ENCODE measurements at regions of chr21 and their contacts with region 1.

Region 1: GRCh38 chr21:29149771-29150425 is 19.5 kb downstream of the MAP3K7CL start:
- DNase-seq: no peak
- H3K4me3 ChIP-seq: no peak overlapping the region
- H3K27ac ChIP-seq: no peak overlapping the region
- H3K4me1 ChIP-seq: peaks cover 16 to 21% of the 10 kb centered on the region in 2 donors
- H3K27me3 ChIP-seq: no peaks in the 10 kb centered on the region
- CTCF ChIP-seq: no peak
- POLR2A ChIP-seq: no peak

Region 2: DNA sequence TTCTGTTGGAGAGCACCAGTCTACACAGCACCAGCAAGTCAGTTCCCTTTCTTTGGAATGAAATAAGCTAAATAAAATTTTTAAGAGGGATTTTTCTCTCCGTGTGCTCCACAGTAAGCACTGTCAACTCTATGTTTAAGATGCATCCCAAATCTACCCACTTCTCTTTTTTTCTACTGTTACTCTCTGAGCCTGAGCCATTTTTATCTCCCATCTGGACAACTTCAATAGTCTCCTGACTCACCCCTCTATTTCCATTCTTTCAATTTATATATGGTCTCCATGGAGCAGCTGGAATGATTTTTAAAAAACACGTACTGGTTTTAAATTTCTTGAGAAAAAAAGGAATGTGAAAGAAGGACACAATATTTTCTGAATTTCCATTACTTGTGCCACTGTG is 51.7 kb before region 1 on chr21:
- intact Hi-C with region 1: loop called (anchors 5 to 10 kb)
- DNase-seq: no peak
- H3K4me3 ChIP-seq: no peak overlapping the region
- H3K27ac ChIP-seq: no peak overlapping the region
- H3K4me1 ChIP-seq: peaks cover 0 to 2% of the 10 kb centered on the region in 2 donors
- H3K27me3 ChIP-seq: no peaks in the 10 kb centered on the region
- CTCF ChIP-seq: no peak
- POLR2A ChIP-seq: no peak